Mammary epithelial cell (primary cell): ENCODE measurements at regions of chr3 and their contacts with region 1.

Region 1: DNA sequence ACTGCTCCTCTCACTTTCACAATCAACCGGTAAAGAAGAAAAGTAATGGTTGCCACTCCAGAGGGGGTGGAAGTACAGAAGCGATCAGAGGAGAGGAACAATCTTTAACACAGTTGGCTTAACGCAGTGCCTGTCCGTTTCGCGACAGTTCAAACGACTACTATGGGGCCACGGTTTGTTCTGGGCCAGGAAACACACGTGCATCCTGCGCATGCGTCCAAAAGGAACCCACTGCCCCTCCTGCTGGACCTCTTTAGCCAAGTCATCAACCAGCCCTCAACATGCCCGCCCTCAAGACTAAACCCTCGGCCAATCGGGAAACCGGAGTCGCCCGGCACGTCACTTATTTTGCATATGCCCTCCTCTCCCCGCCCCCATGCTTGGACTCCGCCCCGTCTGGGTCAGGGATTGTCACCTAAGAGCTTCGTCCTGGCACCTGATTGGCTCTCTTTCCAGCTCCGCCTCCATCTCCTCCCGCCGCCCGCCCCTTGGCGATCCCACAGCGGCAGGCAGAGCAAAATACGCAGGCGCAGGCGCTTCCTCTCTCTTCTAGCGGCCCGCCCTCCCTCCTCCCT is 345 bp upstream of the CDV3 start:
- DNase-seq: peak; percentile 100
- H3K4me3 ChIP-seq: peak overlapping the region in 2 of 3 experiments; percentile 87 to 89
- H3K27ac ChIP-seq: peak overlapping the region; percentile 95
- H3K4me1 ChIP-seq: peaks cover 49% of the 10 kb centered on the region
- H3K27me3 ChIP-seq: no peaks in the 10 kb centered on the region
- CTCF ChIP-seq: no peak

Region 2: DNA sequence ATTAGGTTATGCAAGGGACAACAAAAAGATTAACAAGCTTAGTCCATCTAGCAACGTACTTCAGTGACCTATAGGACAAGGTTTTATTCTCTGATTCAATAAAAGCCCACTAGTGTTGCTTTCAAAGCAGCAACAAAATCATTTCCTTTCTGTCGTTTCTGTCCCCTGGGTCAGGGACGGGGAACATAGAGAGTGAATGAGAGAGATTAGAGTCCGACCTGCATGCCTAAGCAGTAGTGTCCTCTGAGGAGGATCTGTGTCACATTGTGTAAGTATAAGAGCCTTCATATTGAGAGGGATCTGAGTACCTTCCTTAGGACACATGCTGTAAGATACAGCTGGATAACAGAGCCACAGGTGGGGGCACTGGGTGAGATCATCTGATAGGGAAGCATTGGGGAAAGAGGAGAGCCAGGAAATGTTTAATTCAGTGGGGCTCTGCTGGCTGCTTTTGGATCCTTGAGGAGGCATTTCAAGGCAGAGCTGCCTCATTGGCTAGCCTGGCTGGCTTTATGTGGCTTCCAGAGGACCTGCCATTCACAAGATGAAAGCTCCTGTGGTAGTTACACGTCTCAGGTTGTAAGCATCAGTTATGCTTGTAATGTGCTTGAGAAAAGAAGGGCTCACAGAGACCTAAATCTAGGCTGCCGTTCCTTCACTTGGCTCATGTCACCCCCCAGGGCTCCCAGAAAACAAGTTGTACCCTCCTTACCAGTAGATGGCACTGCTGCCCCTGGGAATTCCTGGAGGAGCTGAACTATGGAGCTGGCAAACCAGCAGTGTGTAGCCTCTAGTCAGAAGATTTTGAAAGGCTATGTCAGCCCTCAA is 532.2 kb before region 1 on chr3:
- CTCF ChIA-PET with region 1: no interaction called
- dilution Hi-C with region 1: no loop called
- in situ Hi-C with region 1: no loop called
- intact Hi-C with region 1: loop called (anchors 10 kb)
- DNase-seq: peak; percentile 44
- H3K4me3 ChIP-seq: no peak overlapping the region
- H3K27ac ChIP-seq: no peak overlapping the region
- H3K4me1 ChIP-seq: peaks cover 10% of the 10 kb centered on the region
- H3K27me3 ChIP-seq: peaks cover 19% of the 10 kb centered on the region
- CTCF ChIP-seq: peak; percentile 74 to 86

Region 3: GRCh38 chr3:133464573-133464972 is 108.6 kb before region 1 on chr3:
- CTCF ChIA-PET with region 1: interaction called, 3 read pairs
- dilution Hi-C with region 1: no loop called
- in situ Hi-C with region 1: loop called in 1 of 2 experiments (anchors 10 kb)
- intact Hi-C with region 1: loop called (anchors 2 kb)
- DNase-seq: peak; percentile 24
- H3K4me3 ChIP-seq: no peak overlapping the region
- H3K27ac ChIP-seq: no peak overlapping the region
- H3K4me1 ChIP-seq: no peaks in the 10 kb centered on the region
- H3K27me3 ChIP-seq: no peaks in the 10 kb centered on the region
- CTCF ChIP-seq: peak; percentile 31 to 46

Region 4: GRCh38 chr3:133487920-133488540 is 85.1 kb before region 1 on chr3:
- CTCF ChIA-PET with region 1: interaction called, 6 read pairs
- dilution Hi-C with region 1: loop called (anchors 10 kb)
- in situ Hi-C with region 1: no loop called
- intact Hi-C with region 1: loop called (anchors 1 kb)
- DNase-seq: no peak
- H3K4me3 ChIP-seq: no peak overlapping the region
- H3K27ac ChIP-seq: no peak overlapping the region
- H3K4me1 ChIP-seq: peaks cover 6% of the 10 kb centered on the region
- H3K27me3 ChIP-seq: no peaks in the 10 kb centered on the region
- CTCF ChIP-seq: peak; percentile 27 to 69

Region 5: GRCh38 chr3:133661454-133662277 is 88.5 kb after region 1 on chr3 and contains the start of gene TOPBP1:
- CTCF ChIA-PET with region 1: interaction called, 3 read pairs
- dilution Hi-C with region 1: no loop called
- in situ Hi-C with region 1: no loop called
- intact Hi-C with region 1: loop called (anchors 5 kb)
- DNase-seq: peak; percentile 68
- H3K4me3 ChIP-seq: peak within 1 kb of the TSS; percentile 54 to 93 (median 90)
- H3K27ac ChIP-seq: peak within 1 kb of the TSS; percentile 86
- H3K4me1 ChIP-seq: peaks cover 27% of the 10 kb centered on the region
- H3K27me3 ChIP-seq: no peaks in the 10 kb centered on the region
- CTCF ChIP-seq: no peak
- total RNA-seq, gene TOPBP1: 23.9 to 25.8 TPM

Region 6: DNA sequence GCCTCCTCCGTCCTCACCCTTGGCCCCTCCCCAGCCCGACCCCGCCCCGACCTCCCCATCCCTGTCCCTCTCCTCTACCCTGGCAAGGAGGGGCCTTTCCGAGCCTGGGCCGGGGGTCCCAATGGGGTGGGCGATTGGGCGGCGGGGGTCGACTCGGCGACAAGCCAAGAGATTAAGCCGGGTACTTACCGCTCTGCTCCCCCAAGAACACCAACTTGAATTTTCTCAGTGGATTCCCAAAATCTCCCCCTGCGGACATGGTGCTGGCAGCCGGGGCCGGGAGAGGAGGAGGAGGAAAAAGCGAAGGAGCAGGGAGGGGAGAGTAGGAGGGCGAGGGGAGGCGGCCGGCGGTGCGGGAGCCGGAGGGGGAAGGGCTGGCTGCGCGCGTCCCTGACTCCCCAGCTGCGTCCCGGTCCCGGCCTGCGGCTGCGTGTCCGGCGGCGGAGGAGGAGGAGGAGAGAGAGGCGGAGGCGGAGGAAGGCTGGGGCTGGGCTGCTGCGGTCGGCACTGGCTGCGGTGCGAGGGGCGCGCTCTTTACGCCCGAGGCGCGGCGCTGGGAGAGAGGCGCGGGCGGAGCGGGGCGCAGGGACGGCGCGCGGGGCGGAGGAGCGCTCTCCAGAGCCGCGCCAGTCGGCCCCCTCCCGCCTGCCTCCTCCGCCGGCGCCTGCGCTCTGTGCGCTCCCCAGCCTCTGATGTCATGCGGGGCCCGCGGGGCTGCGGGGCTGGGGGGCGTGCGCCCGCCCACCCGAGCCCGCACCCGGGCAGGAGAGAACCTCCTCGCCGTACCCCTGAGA is 322.3 kb after region 1 on chr3 and contains the start of gene RAB6B:
- CTCF ChIA-PET with region 1: no interaction called
- dilution Hi-C with region 1: no loop called
- in situ Hi-C with region 1: no loop called
- intact Hi-C with region 1: no loop called
- DNase-seq: peak; percentile 39
- H3K4me3 ChIP-seq: peak within 1 kb of the TSS; percentile 62 to 68 (median 63)
- H3K27ac ChIP-seq: no peak within 1 kb of the TSS
- H3K4me1 ChIP-seq: peaks cover 13% of the 10 kb centered on the region
- H3K27me3 ChIP-seq: peaks cover 10% of the 10 kb centered on the region
- CTCF ChIP-seq: no peak
- total RNA-seq, gene RAB6B: 4.1 to 5.3 TPM